ENCODE measurements at regions of chr16 and their contacts with region 1.

Region 1: GRCh38 chr16:56356276-56357240 is 68.8 kb downstream of the AMFR start:
- DNase-seq: peak; percentile 88
- ATAC-seq: peak; percentile 92
- H3K4me3 ChIP-seq: peak overlapping the region; percentile 50
- H3K27ac ChIP-seq: peak overlapping the region; percentile 93
- H3K4me1 ChIP-seq: peaks cover 12% of the 10 kb centered on the region
- H3K27me3 ChIP-seq: no peaks in the 10 kb centered on the region; the same call in 1 of the 2 replicates
- CTCF ChIP-seq: peak; percentile 87
- POLR2A ChIP-seq: 0 out of 2 replicates have a peak, but pooled peaks have one; percentile 4
- RAD21 ChIP-seq: peak; percentile 66

Region 2: GRCh38 chr16:55494994-55495421 is 861.5 kb before region 1 on chr16:
- CTCF ChIA-PET with region 1: no interaction called
- POLR2A ChIA-PET with region 1: no interaction called
- dilution Hi-C with region 1: no loop called
- in situ Hi-C with region 1: loop called (anchors 25 kb)
- intact Hi-C with region 1: no loop called
- DNase-seq: peak; percentile 96
- ATAC-seq: peak; percentile 74
- H3K4me3 ChIP-seq: no peak overlapping the region
- H3K27ac ChIP-seq: no peak overlapping the region
- H3K4me1 ChIP-seq: peaks cover 13% of the 10 kb centered on the region
- H3K27me3 ChIP-seq: no peaks in the 10 kb centered on the region
- CTCF ChIP-seq: peak; percentile 63
- POLR2A ChIP-seq: no peak
- RAD21 ChIP-seq: peak; percentile 85

Region 3: GRCh38 chr16:55944377-55944802 is 412.2 kb before region 1 on chr16:
- CTCF ChIA-PET with region 1: no interaction called
- POLR2A ChIA-PET with region 1: no interaction called
- dilution Hi-C with region 1: no loop called
- in situ Hi-C with region 1: no loop called
- intact Hi-C with region 1: loop called (anchors 1 kb)
- DNase-seq: peak; percentile 55
- ATAC-seq: peak; percentile 98
- H3K4me3 ChIP-seq: no peak overlapping the region
- H3K27ac ChIP-seq: no peak overlapping the region
- H3K4me1 ChIP-seq: no peaks in the 10 kb centered on the region
- H3K27me3 ChIP-seq: no peaks in the 10 kb centered on the region
- CTCF ChIP-seq: peak; percentile 88
- POLR2A ChIP-seq: no peak
- RAD21 ChIP-seq: peak; percentile 80

Region 4: GRCh38 chr16:56332464-56333079 is 24.0 kb before region 1 on chr16:
- CTCF ChIA-PET with region 1: interaction called, 9 read pairs
- POLR2A ChIA-PET with region 1: interaction called, 3 read pairs
- dilution Hi-C with region 1: no loop called
- in situ Hi-C with region 1: no loop called
- intact Hi-C with region 1: loop called (anchors 1 kb)
- DNase-seq: peak; percentile 45
- ATAC-seq: peak; percentile 93
- H3K4me3 ChIP-seq: no peak overlapping the region
- H3K27ac ChIP-seq: no peak overlapping the region
- H3K4me1 ChIP-seq: no peaks in the 10 kb centered on the region
- H3K27me3 ChIP-seq: peaks cover 2% of the 10 kb centered on the region; the same call in 1 of the 2 replicates
- CTCF ChIP-seq: peak; percentile 47
- POLR2A ChIP-seq: no peak
- RAD21 ChIP-seq: peak; percentile 52

Region 5: GRCh38 chr16:56425439-56425832 is 68.9 kb after region 1 on chr16 and contains the start of gene AMFR:
- CTCF ChIA-PET with region 1: no interaction called
- POLR2A ChIA-PET with region 1: interaction called, 7 read pairs
- dilution Hi-C with region 1: no loop called
- in situ Hi-C with region 1: no loop called
- intact Hi-C with region 1: loop called (anchors 2 kb)
- DNase-seq: peak; percentile 80
- ATAC-seq: peak; percentile 96
- H3K4me3 ChIP-seq: peak within 1 kb of the TSS; percentile 93
- H3K27ac ChIP-seq: peak within 1 kb of the TSS; percentile 84
- H3K4me1 ChIP-seq: peaks cover 11% of the 10 kb centered on the region
- H3K27me3 ChIP-seq: no peaks in the 10 kb centered on the region
- CTCF ChIP-seq: peak; percentile 51
- POLR2A ChIP-seq: no peak; the same call in 1 of the 2 replicates
- RAD21 ChIP-seq: peak; percentile 22; the same call in 1 of the 2 replicates
- total RNA-seq, gene AMFR: 215 and 216 TPM in 2 replicates

Region 6: GRCh38 chr16:56608043-56608875 is 251.7 kb after region 1 on chr16 and contains the start of gene MT2A:
- CTCF ChIA-PET with region 1: interaction called, 6 read pairs
- POLR2A ChIA-PET with region 1: no interaction called
- dilution Hi-C with region 1: no loop called
- in situ Hi-C with region 1: no loop called
- intact Hi-C with region 1: loop called (anchors 10 kb)
- DNase-seq: peak; percentile 97
- ATAC-seq: peak; percentile 59
- H3K4me3 ChIP-seq: peak within 1 kb of the TSS; percentile 72
- H3K27ac ChIP-seq: peak within 1 kb of the TSS; percentile 99
- H3K4me1 ChIP-seq: peaks cover 30% of the 10 kb centered on the region
- H3K27me3 ChIP-seq: no peaks in the 10 kb centered on the region
- CTCF ChIP-seq: no peak
- POLR2A ChIP-seq: peak; percentile 96
- RAD21 ChIP-seq: no peak
- total RNA-seq, gene MT2A: 25.5 and 55.5 TPM in 2 replicates